ENCODE measurements at regions of chr10 and their contacts with region 1.

Region 1: GRCh38 chr10:30687698-30688219 is 58.2 kb upstream of the LYZL2 start:
- DNase-seq: peak; percentile 70 to 85
- ATAC-seq: peak; percentile 69 to 82 (median 72)
- H3K4me3 ChIP-seq: no peak overlapping the region
- H3K27ac ChIP-seq: no peak overlapping the region
- H3K4me1 ChIP-seq: no peaks in the 10 kb centered on the region
- H3K27me3 ChIP-seq: peaks cover 0 to 23% (median 2%) of the 10 kb centered on the region in 3 donors
- CTCF ChIP-seq: peak; percentile 90

Region 2: GRCh38 chr10:29496341-29497162 is 1191.2 kb before region 1 on chr10:
- intact Hi-C with region 1: loop called in 1 of 2 experiments (anchors 10 kb)
- DNase-seq: peak; percentile 76 to 88
- ATAC-seq: peak; percentile 64 to 80 (median 76)
- H3K4me3 ChIP-seq: no peak overlapping the region
- H3K27ac ChIP-seq: peak overlapping the region; percentile 17
- H3K4me1 ChIP-seq: no peaks in the 10 kb centered on the region
- H3K27me3 ChIP-seq: no peaks in the 10 kb centered on the region
- CTCF ChIP-seq: peak; percentile 89

Region 3: DNA sequence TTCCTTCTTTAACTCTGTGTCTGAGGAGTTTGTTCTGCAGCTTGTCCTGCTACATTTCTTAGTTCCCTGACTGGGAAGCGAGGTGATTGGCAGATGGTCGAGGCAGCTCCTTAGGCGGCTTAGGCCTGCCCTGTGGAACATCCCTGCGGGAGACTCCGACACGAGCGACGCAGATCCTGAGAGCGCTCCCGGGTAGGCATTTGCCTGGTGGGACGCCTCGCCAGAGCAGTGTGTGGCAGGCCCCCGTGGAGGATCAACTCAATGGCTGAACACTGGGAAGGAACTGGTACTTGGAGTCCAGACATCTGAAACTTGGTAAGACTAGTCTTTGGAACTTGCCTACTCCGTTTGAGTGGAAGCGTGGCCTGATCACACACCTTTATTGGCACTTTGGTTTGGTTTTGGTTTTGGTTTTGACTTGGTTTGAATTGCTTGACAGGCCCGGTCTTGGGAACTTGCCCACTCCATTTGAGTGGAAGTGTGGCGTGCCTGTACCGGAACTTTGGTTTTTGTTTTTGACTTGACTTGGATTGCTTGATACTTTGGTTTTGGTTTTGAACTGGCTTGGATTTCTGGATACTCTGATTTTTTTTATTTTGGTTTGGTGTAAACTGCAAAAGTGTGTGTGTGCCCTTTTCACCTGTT is 211.1 kb before region 1 on chr10:
- intact Hi-C with region 1: no loop called
- DNase-seq: no peak
- ATAC-seq: no peak
- H3K4me3 ChIP-seq: no peak overlapping the region
- H3K27ac ChIP-seq: no peak overlapping the region
- H3K4me1 ChIP-seq: no peaks in the 10 kb centered on the region
- H3K27me3 ChIP-seq: no peaks in the 10 kb centered on the region
- CTCF ChIP-seq: no peak

Measured in psoas muscle (tissue), 8 donors.